ENCODE measurements at regions of chr6 and their contacts with region 1.

Region 1: DNA sequence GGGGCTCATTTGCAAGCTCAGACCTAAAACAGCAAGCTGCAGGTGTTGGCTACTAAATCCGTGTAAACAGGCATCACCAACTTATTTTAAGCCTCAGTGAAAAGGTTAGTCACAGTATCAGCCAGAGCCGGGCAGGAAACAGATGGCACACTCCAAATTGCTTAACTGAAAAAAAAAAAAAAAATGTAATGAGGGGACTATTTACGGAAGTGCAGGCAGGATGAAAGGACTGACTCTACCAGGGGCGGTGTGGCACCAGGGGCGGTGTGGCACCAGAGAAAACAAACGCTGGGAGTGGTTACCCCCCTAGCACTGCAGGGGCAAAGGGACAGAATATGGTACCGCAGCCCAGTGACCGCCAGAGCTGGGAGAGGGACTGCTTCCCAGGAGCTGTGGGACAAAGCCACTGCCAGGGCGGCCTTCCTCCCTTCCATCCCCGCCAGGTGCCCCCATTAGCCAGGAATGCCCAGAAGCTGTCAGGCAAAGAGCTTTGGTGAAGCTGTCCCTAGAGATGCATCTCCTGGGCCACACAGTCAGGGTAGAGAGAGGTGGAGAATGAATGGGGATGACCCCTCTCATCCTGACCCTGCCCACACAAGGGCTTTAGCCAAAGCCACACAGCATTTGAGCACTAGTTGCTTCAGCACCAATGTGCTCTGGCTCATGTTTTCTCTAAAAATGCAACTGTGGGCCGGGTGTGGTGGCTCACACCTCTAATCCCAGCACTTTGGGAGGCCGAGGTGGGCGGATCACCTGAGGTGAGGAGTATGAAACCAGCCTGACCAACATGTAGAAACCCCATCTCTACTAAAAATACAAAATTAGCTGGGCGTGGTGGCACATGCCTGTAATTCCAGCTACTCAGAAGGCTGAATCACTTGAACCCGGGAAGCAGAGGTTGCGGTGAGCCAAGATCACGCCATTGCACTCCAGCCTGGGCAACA is 39.6 kb upstream of the GFOD1 start:
- DNase-seq: peak; percentile 31
- ATAC-seq: peak; percentile 44 to 84 (median 72)
- H3K4me3 ChIP-seq: no peak overlapping the region
- H3K27ac ChIP-seq: peak overlapping the region; percentile 56 to 86 (median 80)
- H3K4me1 ChIP-seq: peaks cover 5 to 64% (median 49%) of the 10 kb centered on the region in 9 donors
- H3K27me3 ChIP-seq: no peaks in the 10 kb centered on the region
- CTCF ChIP-seq: no peak

Region 2: GRCh38 chr6:13272131-13273046 is 254.6 kb before region 1 on chr6:
- intact Hi-C with region 1: no loop called
- DNase-seq: peak; percentile 29
- ATAC-seq: peak in 7 of 8 donors; percentile 36 to 78 (median 60)
- H3K4me3 ChIP-seq: peak overlapping the region in 3 of 10 donors; percentile 1 to 37 (median 18)
- H3K27ac ChIP-seq: peak overlapping the region in 2 of 10 donors; percentile 7 to 62
- H3K4me1 ChIP-seq: peaks cover 0 to 41% (median 11%) of the 10 kb centered on the region in 9 donors
- H3K27me3 ChIP-seq: no peaks in the 10 kb centered on the region
- CTCF ChIP-seq: no peak

Region 3: GRCh38 chr6:13413900-13414555 is 113.0 kb before region 1 on chr6:
- intact Hi-C with region 1: loop called in 1 of 10 experiments (anchors 5 kb)
- DNase-seq: peak in 1 of 2 donors; percentile 49
- ATAC-seq: peak; percentile 37 to 82 (median 72)
- H3K4me3 ChIP-seq: no peak overlapping the region
- H3K27ac ChIP-seq: peak overlapping the region; percentile 62 to 89 (median 83)
- H3K4me1 ChIP-seq: peaks cover 16 to 99% (median 81%) of the 10 kb centered on the region in 9 donors
- H3K27me3 ChIP-seq: no peaks in the 10 kb centered on the region
- CTCF ChIP-seq: peak in 3 of 9 donors; percentile 19 to 43 (median 42)

Region 4: DNA sequence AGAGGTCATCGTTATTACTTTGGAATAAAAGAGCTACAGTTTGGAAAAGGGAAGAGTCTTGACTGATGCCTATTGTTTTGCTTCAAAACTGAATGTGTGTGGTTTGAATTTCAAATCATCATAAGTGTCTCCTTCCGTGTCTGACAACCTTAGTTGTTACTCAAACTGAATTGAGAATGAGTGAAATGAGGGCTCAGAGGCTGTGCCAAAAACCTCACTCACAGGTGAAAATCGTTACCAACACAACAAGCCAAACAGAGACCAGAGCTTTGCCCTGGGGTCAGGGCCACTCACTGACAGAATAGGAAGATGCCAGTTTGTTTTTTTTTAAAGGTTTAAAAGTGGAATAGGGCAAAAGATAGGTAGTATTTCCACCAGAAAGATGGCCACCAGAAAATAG is 32.3 kb after region 1 on chr6:
- intact Hi-C with region 1: no loop called
- DNase-seq: no peak
- ATAC-seq: no peak
- H3K4me3 ChIP-seq: no peak overlapping the region
- H3K27ac ChIP-seq: no peak overlapping the region
- H3K4me1 ChIP-seq: peaks cover 0 to 33% (median 14%) of the 10 kb centered on the region in 9 donors
- H3K27me3 ChIP-seq: no peaks in the 10 kb centered on the region
- CTCF ChIP-seq: no peak

Measured in heart right ventricle (tissue), 16 donors.